ENCODE measurements at regions of chr4 and their contacts with region 1.

Region 1: DNA sequence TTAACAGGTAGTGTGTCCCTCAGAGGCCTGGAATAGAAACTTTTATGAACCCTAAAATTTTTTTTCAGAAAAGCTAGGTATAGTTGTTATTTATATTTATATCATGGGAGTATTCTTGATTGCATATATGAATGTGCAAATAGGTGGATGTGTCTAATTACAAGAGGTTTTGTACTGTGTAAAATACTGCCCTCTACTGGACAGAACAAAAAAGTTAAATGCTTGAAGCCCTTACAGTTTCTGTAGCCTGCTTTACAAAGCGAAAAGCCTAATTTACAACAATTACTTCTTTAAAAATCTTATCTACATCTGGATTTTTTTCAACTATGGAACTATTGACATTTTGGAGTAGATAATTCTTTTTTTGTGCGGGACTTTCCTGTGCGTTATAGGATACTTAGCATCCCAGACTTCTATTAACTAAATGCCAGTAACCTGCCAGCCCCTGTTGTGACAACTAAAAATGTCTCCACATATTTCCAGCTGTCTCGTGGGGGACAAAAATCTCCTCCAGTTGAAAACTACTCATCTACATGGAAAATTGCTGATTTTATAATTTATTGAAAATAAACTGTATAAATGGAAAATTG is 35.1 kb downstream of the ENPEP start:
- DNase-seq: no peak
- ATAC-seq: no peak
- H3K4me3 Mint-ChIP-seq: no peak overlapping the region
- H3K27ac Mint-ChIP-seq: no peak overlapping the region
- H3K4me1 Mint-ChIP-seq: peaks cover 10% of the 10 kb centered on the region
- H3K27me3 Mint-ChIP-seq: peaks cover 2% of the 10 kb centered on the region
- CTCF ChIP-seq: peak; percentile 80

Region 2: GRCh38 chr4:110049951-110050925 is 460.8 kb before region 1 on chr4:
- CTCF ChIA-PET with region 1: interaction called, 21 read pairs
- POLR2A ChIA-PET with region 1: no interaction called
- intact Hi-C with region 1: loop called (anchors 1 kb)
- DNase-seq: no peak
- ATAC-seq: no peak
- H3K4me3 Mint-ChIP-seq: no peak overlapping the region
- H3K27ac Mint-ChIP-seq: no peak overlapping the region
- H3K4me1 Mint-ChIP-seq: no peaks in the 10 kb centered on the region
- H3K27me3 Mint-ChIP-seq: no peaks in the 10 kb centered on the region
- CTCF ChIP-seq: peak; percentile 29

Region 3: GRCh38 chr4:110310795-110311194 is 200.3 kb before region 1 on chr4:
- CTCF ChIA-PET with region 1: no interaction called
- POLR2A ChIA-PET with region 1: no interaction called
- intact Hi-C with region 1: loop called (anchors 1 kb)
- DNase-seq: no peak
- ATAC-seq: no peak
- H3K4me3 Mint-ChIP-seq: no peak overlapping the region
- H3K27ac Mint-ChIP-seq: no peak overlapping the region
- H3K4me1 Mint-ChIP-seq: no peaks in the 10 kb centered on the region
- H3K27me3 Mint-ChIP-seq: no peaks in the 10 kb centered on the region
- CTCF ChIP-seq: no peak

Region 4: DNA sequence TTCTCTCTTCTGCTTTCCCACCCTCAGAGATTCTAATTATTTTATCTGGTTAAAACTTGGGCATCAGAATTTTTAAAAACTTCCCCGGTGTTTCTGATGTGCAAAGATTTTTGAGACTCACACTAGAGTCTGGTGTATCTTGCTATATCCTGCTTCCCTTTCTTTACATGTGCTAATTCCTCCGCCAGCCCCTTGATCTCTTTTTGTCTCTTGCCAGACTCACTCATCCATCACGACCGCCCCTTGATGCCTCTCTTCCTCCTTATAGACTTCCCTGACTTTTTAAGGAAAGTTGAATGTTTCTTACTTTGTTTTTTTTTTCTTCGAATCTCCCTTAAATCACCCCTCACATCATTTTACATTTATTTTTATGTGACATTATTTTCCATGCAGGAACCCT is 386.7 kb after region 1 on chr4:
- CTCF ChIA-PET with region 1: no interaction called
- POLR2A ChIA-PET with region 1: no interaction called
- intact Hi-C with region 1: no loop called
- DNase-seq: no peak
- ATAC-seq: no peak
- H3K4me3 Mint-ChIP-seq: no peak overlapping the region
- H3K27ac Mint-ChIP-seq: no peak overlapping the region
- H3K4me1 Mint-ChIP-seq: no peaks in the 10 kb centered on the region
- H3K27me3 Mint-ChIP-seq: peaks cover 2% of the 10 kb centered on the region
- CTCF ChIP-seq: no peak

Measured in activated B cell treated with CpG ODN at 0.5 μM for 24 hours (primary cell).